ENCODE measurements at regions of chr10 and their contacts with region 1.

Region 1: GRCh38 chr10:101272229-101272868 is 43.1 kb upstream of the LBX1 start:
- DNase-seq: peak; percentile 23 to 49 (median 46)
- H3K4me3 ChIP-seq: no peak overlapping the region
- H3K4me3 Mint-ChIP-seq: peak overlapping the region in 1 of 2 donors; percentile 3
- H3K27ac ChIP-seq: no peak overlapping the region
- H3K27ac Mint-ChIP-seq: no peak overlapping the region
- H3K4me1 ChIP-seq: no peaks in the 10 kb centered on the region
- H3K4me1 Mint-ChIP-seq: no peaks in the 10 kb centered on the region
- H3K27me3 ChIP-seq: peaks cover 0 to 12% of the 10 kb centered on the region in 2 donors
- H3K27me3 Mint-ChIP-seq: peaks cover 33 to 35% (median 34%) of the 10 kb centered on the region in 3 donors
- CTCF ChIP-seq: peak; percentile 78

Region 2: DNA sequence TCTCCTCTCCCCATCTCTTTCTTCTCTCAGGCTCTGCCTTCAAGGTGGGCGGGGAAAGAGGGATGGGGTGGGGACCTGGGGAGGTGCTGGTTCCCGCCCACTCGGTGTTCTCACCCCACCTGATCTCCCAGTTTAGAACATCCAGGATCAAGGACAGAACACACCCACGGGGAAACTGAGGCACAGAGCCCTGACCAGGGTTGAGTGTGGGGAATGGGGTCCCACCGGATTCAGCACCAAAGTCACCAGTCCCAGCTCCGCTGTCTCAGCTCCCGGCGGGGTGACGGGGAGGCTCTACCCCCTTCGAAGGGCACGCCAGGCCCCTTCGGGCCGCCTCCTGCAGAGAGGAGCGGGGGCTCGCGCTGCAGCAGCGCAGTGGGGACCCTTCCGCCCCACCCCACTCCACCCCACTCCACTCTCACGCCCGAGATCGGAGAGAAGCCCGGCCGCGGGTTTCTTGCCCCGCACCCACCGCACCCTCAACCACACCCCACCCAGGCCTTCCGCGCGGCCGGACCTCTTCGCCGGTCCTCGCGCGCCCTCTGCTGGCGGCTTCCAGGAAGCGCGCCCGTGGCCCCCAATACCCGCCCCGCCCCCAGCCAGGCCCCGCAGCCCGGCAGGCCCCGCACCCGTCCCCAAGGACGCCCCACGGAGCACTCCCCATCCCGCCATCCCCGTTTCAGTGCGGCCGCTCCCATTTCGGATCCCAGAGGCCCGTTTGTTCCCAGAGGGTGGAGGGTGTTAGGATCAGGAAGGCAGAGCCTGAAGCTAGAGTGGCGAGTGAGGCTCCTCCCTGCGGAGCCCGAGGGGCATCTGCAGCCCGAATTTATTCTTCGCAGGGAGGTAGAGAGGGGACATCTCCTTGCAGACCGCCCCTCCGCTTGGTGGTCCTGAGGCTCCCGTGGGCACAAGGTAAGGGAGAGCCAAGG is 297.8 kb after region 1 on chr10:
- intact Hi-C with region 1: loop called (anchors 5 to 10 kb)
- DNase-seq: peak; percentile 63 to 74 (median 66)
- H3K4me3 ChIP-seq: peak overlapping the region; percentile 67 to 96 (median 78)
- H3K4me3 Mint-ChIP-seq: peak overlapping the region; percentile 86 to 91
- H3K27ac ChIP-seq: peak overlapping the region in 1 of 2 donors; percentile 68
- H3K27ac Mint-ChIP-seq: peak overlapping the region in 4 of 7 donors; percentile 19 to 54 (median 44)
- H3K4me1 ChIP-seq: peaks cover 17 to 25% of the 10 kb centered on the region in 2 donors
- H3K4me1 Mint-ChIP-seq: peaks cover 22% of the 10 kb centered on the region
- H3K27me3 ChIP-seq: peaks cover 38 to 48% of the 10 kb centered on the region in 2 donors
- H3K27me3 Mint-ChIP-seq: peaks cover 48 to 53% (median 50%) of the 10 kb centered on the region in 3 donors
- CTCF ChIP-seq: peak; percentile 95

Measured in CD14-positive monocyte (primary cell).